Natural killer cell (primary cell): ENCODE measurements at regions of chr7 and their contacts with region 1.

Region 1: DNA sequence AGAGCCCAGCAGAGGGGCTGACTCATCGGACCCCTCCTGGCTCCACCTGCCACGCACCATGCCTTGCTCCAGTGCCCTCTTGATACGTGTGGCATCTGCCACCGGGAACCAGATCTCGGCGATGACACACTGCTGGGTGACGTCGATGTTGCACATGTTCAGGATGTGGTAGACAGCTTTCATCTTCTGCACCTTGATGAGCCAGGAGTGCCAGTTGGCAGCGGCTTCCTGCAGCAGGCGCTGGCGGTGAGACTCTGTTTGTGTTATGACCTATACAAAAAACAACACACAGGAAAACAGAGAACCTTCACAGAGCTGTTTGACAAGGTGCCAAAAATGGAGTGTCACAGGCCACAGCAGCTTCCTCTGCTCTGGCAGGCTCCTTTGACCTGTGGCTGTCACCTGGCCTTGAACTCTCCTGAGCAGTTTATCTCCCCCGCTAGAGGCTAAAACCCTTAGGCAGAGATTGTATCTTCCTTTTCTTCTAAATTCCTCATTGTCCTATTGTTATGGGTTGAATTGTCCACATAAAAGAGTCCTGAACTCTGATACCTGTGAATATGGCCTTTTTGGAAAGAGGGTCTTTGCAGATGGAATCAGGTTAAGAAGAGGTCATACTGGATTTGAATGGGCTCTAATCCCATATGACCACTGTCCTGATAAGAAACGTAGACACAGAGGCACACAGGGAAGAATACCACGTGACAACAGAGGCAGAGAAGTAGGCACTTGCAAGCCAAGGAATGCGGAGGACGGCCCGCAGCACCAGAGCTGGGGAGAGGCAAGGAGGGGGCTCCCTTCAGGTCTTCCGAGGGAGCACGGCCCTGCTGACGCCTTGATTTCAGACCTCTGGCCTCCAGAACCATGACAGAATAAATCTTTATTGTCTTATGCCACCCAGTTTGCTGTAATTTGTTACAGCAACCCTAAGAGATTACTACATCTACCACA is 45.0 kb upstream of the TMEM213 start:
- DNase-seq: peak; percentile 79 to 98
- ATAC-seq: peak; percentile 89 to 91 (median 89)
- H3K4me3 ChIP-seq: no peak overlapping the region
- H3K4me3 Mint-ChIP-seq: peak overlapping the region; percentile 31
- H3K27ac ChIP-seq: peak overlapping the region; percentile 66
- H3K27ac Mint-ChIP-seq: peak overlapping the region; percentile 83
- H3K4me1 ChIP-seq: peaks cover 40% of the 10 kb centered on the region
- H3K4me1 Mint-ChIP-seq: peaks cover 16 to 36% of the 10 kb centered on the region in 2 donors
- H3K27me3 ChIP-seq: no peaks in the 10 kb centered on the region
- H3K27me3 Mint-ChIP-seq: peaks cover 0 to 7% of the 10 kb centered on the region in 2 donors
- CTCF ChIP-seq: no peak

Region 2: DNA sequence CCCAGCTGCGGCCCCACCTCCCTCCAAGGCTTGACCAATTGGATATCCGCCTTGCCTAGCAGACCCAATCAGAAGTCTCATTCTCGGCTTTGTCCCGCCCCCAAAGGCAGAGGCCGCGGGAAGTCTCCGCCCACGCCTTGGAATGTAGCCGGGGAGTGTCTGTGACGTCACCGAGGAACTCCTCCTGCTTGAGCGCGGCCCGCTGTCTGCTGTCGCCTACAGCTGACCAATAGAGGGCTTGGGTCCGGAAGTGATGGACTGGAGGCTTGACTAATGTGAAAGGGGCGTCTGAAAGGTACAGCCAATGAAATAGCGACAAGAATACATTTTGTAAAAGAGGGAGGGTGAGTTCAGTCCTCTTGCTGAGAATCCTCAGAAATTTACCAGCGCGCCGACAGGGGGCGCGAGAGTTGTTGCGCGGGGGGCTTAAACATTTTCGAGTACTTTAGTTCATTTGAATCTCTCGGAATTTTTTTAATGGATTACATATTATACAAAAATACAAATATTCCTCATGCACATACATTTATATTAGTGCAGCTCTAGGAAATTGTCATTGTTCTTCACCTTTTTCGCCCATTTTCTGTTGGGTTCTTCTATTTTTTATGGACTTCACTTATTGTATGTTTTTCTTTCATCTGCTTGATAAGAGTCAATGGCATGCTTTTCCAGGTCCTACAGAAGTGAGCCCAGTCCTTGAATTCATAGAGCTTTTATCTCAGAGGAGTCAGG is 750.6 kb before region 1 on chr7:
- intact Hi-C with region 1: loop called (anchors 1 kb)
- DNase-seq: peak; percentile 98 to 100
- ATAC-seq: peak; percentile 89 to 97 (median 92)
- H3K4me3 ChIP-seq: peak overlapping the region; percentile 97
- H3K4me3 Mint-ChIP-seq: peak overlapping the region; percentile 99
- H3K27ac ChIP-seq: peak overlapping the region; percentile 86
- H3K27ac Mint-ChIP-seq: peak overlapping the region; percentile 94 to 96
- H3K4me1 ChIP-seq: peaks cover 10% of the 10 kb centered on the region
- H3K4me1 Mint-ChIP-seq: peaks cover 38 to 40% of the 10 kb centered on the region in 2 donors
- H3K27me3 ChIP-seq: no peaks in the 10 kb centered on the region
- H3K27me3 Mint-ChIP-seq: no peaks in the 10 kb centered on the region
- CTCF ChIP-seq: peak; percentile 96

Region 3: DNA sequence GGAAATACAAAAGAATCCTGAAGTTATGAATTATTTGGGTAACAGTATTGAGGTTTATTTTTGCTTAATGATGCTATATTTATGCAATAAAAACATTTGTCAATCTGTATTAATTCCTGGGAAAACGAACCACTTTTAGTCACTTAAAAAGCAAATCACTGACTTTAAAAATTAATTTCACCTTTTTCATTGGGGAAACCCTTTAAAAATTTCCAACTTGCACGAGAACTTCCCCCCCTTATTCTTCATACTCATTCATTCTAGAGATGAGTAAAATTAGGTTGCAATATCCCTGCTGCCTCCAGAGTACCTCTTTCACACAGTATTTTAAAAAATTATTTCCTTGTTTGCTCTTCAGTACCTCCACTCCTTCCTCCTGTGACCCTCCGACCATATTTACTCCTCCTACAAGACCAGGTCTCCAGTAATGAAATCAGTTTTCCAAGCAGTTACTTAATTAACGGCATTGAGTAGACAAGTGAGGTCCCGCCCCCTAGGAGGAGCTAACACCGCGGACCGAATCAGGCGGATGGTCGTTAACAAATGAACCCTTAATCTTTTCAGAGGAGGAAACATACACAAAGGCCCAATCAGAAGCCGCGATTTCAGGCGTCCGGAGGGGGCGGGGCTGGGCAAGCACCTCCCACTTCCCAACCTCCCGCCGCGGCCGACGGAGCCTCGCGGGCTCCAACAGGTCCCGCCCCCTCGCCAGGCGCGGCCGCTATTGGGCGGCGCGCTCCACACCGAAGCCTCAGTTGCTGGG is 293.2 kb before region 1 on chr7:
- intact Hi-C with region 1: loop called (anchors 1 kb)
- DNase-seq: peak; percentile 98 to 99
- ATAC-seq: peak; percentile 86 to 96 (median 87)
- H3K4me3 ChIP-seq: peak overlapping the region; percentile 19
- H3K4me3 Mint-ChIP-seq: peak overlapping the region; percentile 79
- H3K27ac ChIP-seq: peak overlapping the region; percentile 12
- H3K27ac Mint-ChIP-seq: peak overlapping the region; percentile 63 to 81
- H3K4me1 ChIP-seq: peaks cover 13% of the 10 kb centered on the region
- H3K4me1 Mint-ChIP-seq: peaks cover 18 to 22% of the 10 kb centered on the region in 2 donors
- H3K27me3 ChIP-seq: no peaks in the 10 kb centered on the region
- H3K27me3 Mint-ChIP-seq: peaks cover 0 to 5% of the 10 kb centered on the region in 2 donors
- CTCF ChIP-seq: no peak

Region 4: DNA sequence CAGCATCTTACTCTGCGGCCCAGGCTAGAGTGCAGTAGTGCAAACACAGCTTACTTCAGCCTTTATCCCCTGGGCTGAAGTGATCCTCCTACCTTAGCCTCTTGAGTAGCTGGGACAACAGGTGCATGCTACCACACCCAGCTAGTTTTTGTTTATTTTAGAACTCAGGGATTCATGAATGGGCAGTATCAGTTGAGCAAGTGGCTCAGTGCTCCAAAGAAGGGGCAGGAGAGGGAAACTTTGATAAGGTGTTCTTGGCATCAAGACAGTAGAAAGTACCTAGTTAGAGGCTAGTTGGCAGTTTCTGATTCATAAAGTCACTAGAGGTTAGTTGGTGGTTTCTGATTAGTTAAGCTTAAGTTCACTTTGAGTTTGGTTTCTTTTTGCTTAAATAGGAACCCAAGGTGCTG is 274.3 kb before region 1 on chr7:
- intact Hi-C with region 1: no loop called
- DNase-seq: no peak
- ATAC-seq: peak; percentile 54 to 66 (median 61)
- H3K4me3 ChIP-seq: no peak overlapping the region
- H3K4me3 Mint-ChIP-seq: no peak overlapping the region
- H3K27ac ChIP-seq: no peak overlapping the region
- H3K27ac Mint-ChIP-seq: peak overlapping the region; percentile 34 to 55
- H3K4me1 ChIP-seq: peaks cover 10% of the 10 kb centered on the region
- H3K4me1 Mint-ChIP-seq: peaks cover 72 to 73% of the 10 kb centered on the region in 2 donors
- H3K27me3 ChIP-seq: no peaks in the 10 kb centered on the region
- H3K27me3 Mint-ChIP-seq: no peaks in the 10 kb centered on the region
- CTCF ChIP-seq: no peak

Region 5: GRCh38 chr7:138875794-138876193 is 123.0 kb after region 1 on chr7:
- intact Hi-C with region 1: loop called (anchors 2 kb)
- DNase-seq: peak; percentile 47 to 84
- ATAC-seq: peak; percentile 98 to 99 (median 98)
- H3K4me3 ChIP-seq: no peak overlapping the region
- H3K4me3 Mint-ChIP-seq: no peak overlapping the region
- H3K27ac ChIP-seq: no peak overlapping the region
- H3K27ac Mint-ChIP-seq: peak overlapping the region; percentile 58 to 72
- H3K4me1 ChIP-seq: peaks cover 12% of the 10 kb centered on the region
- H3K4me1 Mint-ChIP-seq: peaks cover 9 to 14% of the 10 kb centered on the region in 2 donors
- H3K27me3 ChIP-seq: no peaks in the 10 kb centered on the region
- H3K27me3 Mint-ChIP-seq: no peaks in the 10 kb centered on the region
- CTCF ChIP-seq: no peak

Region 6: DNA sequence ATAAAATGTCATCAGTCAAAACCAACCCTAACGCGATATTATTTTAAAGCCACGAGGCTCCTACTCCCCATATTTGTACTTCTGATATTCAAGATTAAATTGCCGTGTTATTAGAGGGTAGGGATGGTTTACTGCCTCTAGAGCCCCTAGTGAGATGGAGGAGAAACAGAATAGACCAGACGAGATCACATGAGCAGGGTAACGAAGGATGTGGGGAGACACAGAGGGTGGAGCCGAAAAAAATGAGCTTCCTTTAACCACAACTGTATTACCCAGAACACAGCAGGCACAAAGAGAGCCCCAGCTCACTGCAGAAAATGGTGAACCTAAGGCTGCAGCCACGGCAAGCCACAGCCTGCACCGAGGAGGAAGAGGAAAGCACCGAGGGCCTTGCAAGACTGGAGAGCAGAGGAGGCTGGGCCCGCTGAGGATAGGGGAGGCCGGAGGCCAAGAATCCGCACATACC is 342.4 kb after region 1 on chr7:
- intact Hi-C with region 1: loop called (anchors 10 kb)
- DNase-seq: peak; percentile 70 to 95
- ATAC-seq: peak; percentile 85 to 96 (median 95)
- H3K4me3 ChIP-seq: peak overlapping the region; percentile 21
- H3K4me3 Mint-ChIP-seq: peak overlapping the region; percentile 90
- H3K27ac ChIP-seq: peak overlapping the region; percentile 71
- H3K27ac Mint-ChIP-seq: peak overlapping the region; percentile 86 to 95
- H3K4me1 ChIP-seq: peaks cover 70% of the 10 kb centered on the region
- H3K4me1 Mint-ChIP-seq: peaks cover 70 to 79% of the 10 kb centered on the region in 2 donors
- H3K27me3 ChIP-seq: no peaks in the 10 kb centered on the region
- H3K27me3 Mint-ChIP-seq: no peaks in the 10 kb centered on the region
- CTCF ChIP-seq: no peak